ENCODE measurements at regions of chr2 and their contacts with region 1.

Region 1: DNA sequence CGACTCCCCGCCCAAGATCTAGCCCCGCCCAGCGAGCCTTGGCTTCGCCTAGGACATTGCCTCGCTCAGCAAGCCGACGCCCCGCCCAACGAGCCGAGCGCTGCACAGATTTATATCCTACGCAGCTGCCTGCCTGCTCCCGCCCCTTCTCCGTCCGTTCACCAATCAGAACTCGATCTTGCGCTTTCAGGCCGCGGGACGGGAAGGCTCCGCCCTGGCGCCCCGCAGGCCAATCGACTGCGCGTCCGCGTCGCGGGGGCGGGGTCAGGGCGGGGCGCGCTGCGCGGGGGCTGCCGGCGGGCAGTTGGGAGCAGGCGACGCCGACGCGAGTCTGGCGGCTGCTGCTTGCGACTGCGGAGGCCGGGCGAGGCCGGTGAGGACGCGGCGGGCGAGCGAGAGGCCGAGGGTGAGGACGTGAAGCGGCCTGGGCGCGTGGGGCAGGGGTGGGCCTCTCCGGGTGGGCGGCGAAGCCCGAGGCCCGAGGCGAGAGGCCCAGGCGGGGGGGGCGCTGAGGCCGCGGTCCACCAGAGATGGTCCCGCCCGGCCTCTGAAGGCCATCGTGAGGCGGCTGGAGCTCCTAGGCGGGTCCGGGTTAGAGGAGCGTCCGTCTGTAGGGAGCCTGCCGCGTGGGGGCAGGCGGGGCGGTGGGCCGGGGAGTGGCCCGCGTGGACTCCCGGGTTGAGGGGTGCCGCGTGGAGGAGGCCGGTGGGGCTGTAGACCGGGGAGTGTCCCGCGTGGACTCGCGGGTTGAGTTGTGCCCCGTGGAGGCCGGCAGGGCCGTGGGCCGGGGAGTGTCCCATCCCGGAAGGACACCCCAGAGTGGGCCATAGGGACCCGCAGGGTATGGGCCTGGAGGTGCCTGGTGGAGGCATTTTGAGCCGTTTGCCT is at the start of gene FARP2:
- DNase-seq: peak; percentile 99
- ATAC-seq: peak; percentile 87
- H3K4me3 ChIP-seq: peak within 1 kb of the TSS; percentile 51 to 80 (median 77)
- H3K4me3 Mint-ChIP-seq: peak within 1 kb of the TSS; percentile 90
- H3K27ac ChIP-seq: peak within 1 kb of the TSS; percentile 54 to 82
- H3K27ac Mint-ChIP-seq: peak within 1 kb of the TSS; percentile 96
- H3K4me1 ChIP-seq: peaks cover 33 to 38% of the 10 kb centered on the region in 2 donors
- H3K4me1 Mint-ChIP-seq: peaks cover 39% of the 10 kb centered on the region
- H3K27me3 ChIP-seq: no peaks in the 10 kb centered on the region
- H3K27me3 Mint-ChIP-seq: no peaks in the 10 kb centered on the region
- CTCF ChIP-seq: no peak
- total RNA-seq, gene FARP2: 114 and 151 TPM in 2 replicates

Region 2: GRCh38 chr2:241271641-241272297 is 84.5 kb before region 1 on chr2:
- CTCF ChIA-PET with region 1: no interaction called
- POLR2A ChIA-PET with region 1: no interaction called
- intact Hi-C with region 1: loop called (anchors 1 kb)
- DNase-seq: peak; percentile 68
- ATAC-seq: peak; percentile 70
- H3K4me3 ChIP-seq: peak overlapping the region; percentile 62 to 81 (median 67)
- H3K4me3 Mint-ChIP-seq: peak overlapping the region; percentile 98
- H3K27ac ChIP-seq: peak overlapping the region; percentile 21 to 40
- H3K27ac Mint-ChIP-seq: peak overlapping the region; percentile 92
- H3K4me1 ChIP-seq: peaks cover 12 to 21% of the 10 kb centered on the region in 2 donors
- H3K4me1 Mint-ChIP-seq: peaks cover 31% of the 10 kb centered on the region
- H3K27me3 ChIP-seq: no peaks in the 10 kb centered on the region
- H3K27me3 Mint-ChIP-seq: no peaks in the 10 kb centered on the region
- CTCF ChIP-seq: no peak

Region 3: GRCh38 chr2:241379481-241380480 is 23.6 kb after region 1 on chr2:
- CTCF ChIA-PET with region 1: interaction called, 9 read pairs
- POLR2A ChIA-PET with region 1: no interaction called
- intact Hi-C with region 1: loop called (anchors 1 kb)
- DNase-seq: no peak
- ATAC-seq: no peak
- H3K4me3 ChIP-seq: no peak overlapping the region
- H3K4me3 Mint-ChIP-seq: no peak overlapping the region
- H3K27ac ChIP-seq: no peak overlapping the region
- H3K27ac Mint-ChIP-seq: no peak overlapping the region
- H3K4me1 ChIP-seq: peaks cover 3 to 6% of the 10 kb centered on the region in 2 donors
- H3K4me1 Mint-ChIP-seq: peaks cover 34% of the 10 kb centered on the region
- H3K27me3 ChIP-seq: no peaks in the 10 kb centered on the region
- H3K27me3 Mint-ChIP-seq: no peaks in the 10 kb centered on the region
- CTCF ChIP-seq: no peak

Region 4: DNA sequence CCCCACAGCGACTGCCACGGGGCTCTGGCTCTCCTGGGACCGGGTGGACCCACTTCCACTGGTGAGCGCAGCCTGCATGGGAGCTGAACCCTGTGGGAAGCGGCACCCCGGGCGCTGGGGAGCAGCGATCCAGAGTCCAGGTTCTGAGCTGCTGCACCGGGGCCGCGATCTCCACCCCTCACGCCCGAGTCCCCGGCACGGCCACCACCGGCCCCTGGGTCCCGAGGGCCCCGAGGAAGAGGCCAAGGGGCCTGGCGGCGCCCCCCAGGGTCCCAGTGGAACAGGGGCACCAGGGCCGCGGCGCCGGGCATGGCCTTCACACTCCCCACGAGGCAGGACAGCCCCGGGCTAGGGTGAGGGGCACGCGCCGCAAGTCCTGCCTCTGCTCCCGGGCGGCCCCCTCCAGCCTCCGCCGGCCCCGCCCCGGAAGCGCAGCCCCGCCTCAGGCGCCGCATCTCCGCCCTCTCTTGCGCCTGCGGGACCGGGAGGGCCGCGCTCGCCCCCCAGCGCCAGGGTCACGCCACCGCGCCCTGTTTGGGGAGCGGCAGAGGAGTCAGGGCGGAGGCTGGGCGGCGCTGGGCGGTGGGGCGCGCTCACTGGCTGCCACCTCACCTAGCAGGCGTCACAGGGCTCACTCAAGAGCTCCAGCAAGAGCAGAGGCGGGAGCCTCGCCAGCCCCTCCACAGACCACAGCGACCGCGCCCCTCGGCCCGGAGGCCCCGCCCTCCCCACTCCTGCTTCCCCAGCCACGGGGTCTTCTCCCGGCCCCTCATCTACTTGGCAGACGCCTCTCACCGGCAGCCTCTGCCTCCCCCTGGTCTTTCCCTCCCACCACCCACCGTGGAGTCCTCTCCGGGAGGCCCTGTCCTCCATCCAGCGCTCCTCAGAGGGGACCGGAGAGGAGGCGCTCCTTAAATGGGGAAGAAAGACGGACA is 253.9 kb after region 1 on chr2:
- CTCF ChIA-PET with region 1: no interaction called
- POLR2A ChIA-PET with region 1: no interaction called
- intact Hi-C with region 1: loop called (anchors 1 kb)
- DNase-seq: peak; percentile 93
- ATAC-seq: peak; percentile 99
- H3K4me3 ChIP-seq: peak overlapping the region in 4 of 5 experiments; percentile 50 to 71 (median 62)
- H3K4me3 Mint-ChIP-seq: peak overlapping the region; percentile 66
- H3K27ac ChIP-seq: peak overlapping the region; percentile 50 to 74
- H3K27ac Mint-ChIP-seq: peak overlapping the region; percentile 63
- H3K4me1 ChIP-seq: peaks cover 8 to 16% of the 10 kb centered on the region in 2 donors
- H3K4me1 Mint-ChIP-seq: peaks cover 20% of the 10 kb centered on the region
- H3K27me3 ChIP-seq: no peaks in the 10 kb centered on the region
- H3K27me3 Mint-ChIP-seq: no peaks in the 10 kb centered on the region
- CTCF ChIP-seq: peak; percentile 76

Region 5: GRCh38 chr2:241734467-241735208 is 378.4 kb after region 1 on chr2 and contains the start of gene D2HGDH:
- CTCF ChIA-PET with region 1: no interaction called
- POLR2A ChIA-PET with region 1: no interaction called
- intact Hi-C with region 1: loop called (anchors 1 kb)
- DNase-seq: peak; percentile 93
- ATAC-seq: peak; percentile 96
- H3K4me3 ChIP-seq: peak within 1 kb of the TSS; percentile 5 to 94 (median 83)
- H3K4me3 Mint-ChIP-seq: peak within 1 kb of the TSS; percentile 92
- H3K27ac ChIP-seq: peak within 1 kb of the TSS; percentile 40 to 84
- H3K27ac Mint-ChIP-seq: peak within 1 kb of the TSS; percentile 81
- H3K4me1 ChIP-seq: peaks cover 4 to 30% of the 10 kb centered on the region in 2 donors
- H3K4me1 Mint-ChIP-seq: peaks cover 38% of the 10 kb centered on the region
- H3K27me3 ChIP-seq: no peaks in the 10 kb centered on the region
- H3K27me3 Mint-ChIP-seq: no peaks in the 10 kb centered on the region
- CTCF ChIP-seq: no peak
- total RNA-seq, gene D2HGDH: 57.1 and 67.7 TPM in 2 replicates